ENCODE measurements at regions of chr14 and their contacts with region 1.

Region 1: GRCh38 chr14:91323671-91324605 is 79.4 kb upstream of the GPR68 start:
- DNase-seq: peak; percentile 99
- H3K4me3 Mint-ChIP-seq: peak overlapping the region; percentile 83
- H3K27ac Mint-ChIP-seq: peak overlapping the region; percentile 99
- H3K4me1 Mint-ChIP-seq: peaks cover 79% of the 10 kb centered on the region
- H3K27me3 Mint-ChIP-seq: no peaks in the 10 kb centered on the region

Region 2: DNA sequence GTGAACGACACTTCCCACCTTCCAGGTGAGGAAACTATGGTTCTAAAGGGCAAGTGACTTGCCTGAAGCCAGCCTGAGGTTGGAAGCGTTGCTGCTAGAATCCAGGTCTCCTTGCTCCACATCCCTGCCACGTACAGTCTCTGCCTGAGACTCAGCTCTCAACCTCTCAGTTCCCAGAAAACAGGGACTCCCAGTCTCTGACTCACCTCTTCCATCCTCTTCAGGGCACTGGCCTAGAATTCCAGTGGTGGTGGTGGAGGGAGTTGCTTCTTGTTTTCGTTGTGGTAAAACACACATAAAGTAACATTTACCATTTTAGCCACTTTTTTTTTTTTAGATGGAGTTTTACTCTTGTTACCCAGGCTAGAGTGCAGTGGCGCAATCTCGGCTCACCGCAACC is 86.7 kb before region 1 on chr14:
- CTCF ChIA-PET with region 1: no interaction called
- intact Hi-C with region 1: no loop called
- DNase-seq: no peak
- H3K4me3 Mint-ChIP-seq: no peak overlapping the region
- H3K27ac Mint-ChIP-seq: no peak overlapping the region
- H3K4me1 Mint-ChIP-seq: peaks cover 47% of the 10 kb centered on the region
- H3K27me3 Mint-ChIP-seq: no peaks in the 10 kb centered on the region

Region 3: GRCh38 chr14:91286530-91286937 is 37.4 kb before region 1 on chr14:
- CTCF ChIA-PET with region 1: no interaction called
- intact Hi-C with region 1: no loop called
- DNase-seq: peak; percentile 90
- H3K4me3 Mint-ChIP-seq: no peak overlapping the region
- H3K27ac Mint-ChIP-seq: peak overlapping the region; percentile 74
- H3K4me1 Mint-ChIP-seq: peaks cover 4% of the 10 kb centered on the region
- H3K27me3 Mint-ChIP-seq: no peaks in the 10 kb centered on the region

Region 4: DNA sequence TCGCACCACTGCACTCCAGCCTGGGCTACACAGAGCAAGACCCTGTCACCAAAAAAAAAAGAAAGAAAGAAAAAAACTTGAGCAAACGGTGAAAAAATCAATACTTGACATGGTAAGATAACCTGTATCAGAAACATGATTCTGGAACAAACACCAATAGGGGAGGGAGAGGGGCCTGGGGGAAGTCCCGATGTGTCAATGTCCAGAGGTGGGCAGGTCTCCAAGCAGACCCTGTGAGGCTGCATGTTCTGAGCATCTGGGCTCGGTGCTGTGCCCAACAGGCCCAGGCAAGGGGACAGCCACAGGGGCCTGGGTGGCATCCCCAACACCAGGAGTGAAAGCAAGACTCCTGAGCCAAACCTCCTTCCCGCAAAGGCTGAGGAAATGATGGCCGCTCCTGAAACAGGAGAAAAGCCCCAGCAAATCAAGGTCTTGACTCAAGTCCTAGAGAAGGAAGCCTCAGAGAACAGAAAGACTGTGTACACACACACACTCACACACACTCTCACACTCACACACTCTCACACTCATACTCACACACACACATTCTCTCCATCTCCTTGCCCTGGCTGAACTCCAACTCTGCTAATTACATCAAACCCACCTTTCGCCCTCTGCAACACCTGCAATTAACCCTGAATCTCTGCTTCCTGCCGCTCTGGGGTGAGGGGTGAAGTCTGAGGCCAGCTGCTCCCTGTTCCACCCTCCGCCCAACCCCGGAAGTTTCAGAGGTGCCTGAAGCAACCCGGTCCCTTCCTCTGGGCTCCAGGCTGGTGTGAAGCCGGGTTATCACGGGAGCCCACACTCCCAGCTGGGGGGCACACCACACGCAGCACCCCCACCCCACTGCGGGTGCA is 73.2 kb after region 1 on chr14:
- CTCF ChIA-PET with region 1: interaction called, 16 read pairs
- intact Hi-C with region 1: no loop called
- DNase-seq: peak; percentile 88
- H3K4me3 Mint-ChIP-seq: peak overlapping the region; percentile 64
- H3K27ac Mint-ChIP-seq: peak overlapping the region; percentile 87
- H3K4me1 Mint-ChIP-seq: peaks cover 92% of the 10 kb centered on the region
- H3K27me3 Mint-ChIP-seq: no peaks in the 10 kb centered on the region

Region 5: GRCh38 chr14:91424813-91425530 is 101.0 kb after region 1 on chr14:
- CTCF ChIA-PET with region 1: interaction called, 16 read pairs
- intact Hi-C with region 1: no loop called
- DNase-seq: no peak
- H3K4me3 Mint-ChIP-seq: no peak overlapping the region
- H3K27ac Mint-ChIP-seq: no peak overlapping the region
- H3K4me1 Mint-ChIP-seq: peaks cover 12% of the 10 kb centered on the region
- H3K27me3 Mint-ChIP-seq: no peaks in the 10 kb centered on the region

Region 6: GRCh38 chr14:91573893-91574837 is 250.2 kb after region 1 on chr14:
- CTCF ChIA-PET with region 1: no interaction called
- intact Hi-C with region 1: loop called (anchors 1 kb)
- DNase-seq: peak; percentile 96
- H3K4me3 Mint-ChIP-seq: peak overlapping the region; percentile 74
- H3K27ac Mint-ChIP-seq: no peak overlapping the region
- H3K4me1 Mint-ChIP-seq: peaks cover 13% of the 10 kb centered on the region
- H3K27me3 Mint-ChIP-seq: no peaks in the 10 kb centered on the region

Region 7: GRCh38 chr14:91732452-91733167 is 408.7 kb after region 1 on chr14:
- CTCF ChIA-PET with region 1: no interaction called
- intact Hi-C with region 1: no loop called
- DNase-seq: no peak
- H3K4me3 Mint-ChIP-seq: no peak overlapping the region
- H3K27ac Mint-ChIP-seq: no peak overlapping the region
- H3K4me1 Mint-ChIP-seq: peaks cover 18% of the 10 kb centered on the region
- H3K27me3 Mint-ChIP-seq: no peaks in the 10 kb centered on the region

Measured in activated naive CD4-positive, alpha-beta T cell treated with anti-CD3 and anti-CD28 coated beads for 36 hours (primary cell).